ENCODE measurements at regions of chr2 and their contacts with region 1.

Region 1: GRCh38 chr2:160493227-160494028 is at the start of gene RBMS1:
- DNase-seq: peak; percentile 82
- total RNA-seq, gene RBMS1: 75.3 TPM

Region 2: DNA sequence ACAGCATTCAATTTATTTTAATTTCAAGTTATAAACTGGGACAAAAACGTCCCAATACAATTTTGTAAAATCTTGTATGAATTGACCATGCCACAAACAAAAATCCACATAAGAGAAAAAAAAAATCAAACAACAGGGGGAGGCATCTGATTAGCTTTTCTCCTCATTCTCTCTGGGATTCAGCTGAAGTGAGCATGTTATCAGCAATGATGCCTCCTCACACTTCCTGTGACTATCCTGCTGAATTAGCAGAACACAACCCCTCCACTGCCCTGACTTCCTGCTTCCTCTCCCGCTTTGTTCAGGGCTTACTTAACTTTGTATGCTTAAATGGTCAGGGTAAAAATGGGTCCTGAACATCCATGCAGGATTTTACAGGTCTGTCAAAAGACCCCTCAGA is 161.1 kb before region 1 on chr2:
- intact Hi-C with region 1: loop called (anchors 5 kb)
- DNase-seq: no peak

Region 3: GRCh38 chr2:160429248-160430000 is 64.0 kb before region 1 on chr2:
- intact Hi-C with region 1: loop called (anchors 5 kb)
- DNase-seq: no peak

Region 4: DNA sequence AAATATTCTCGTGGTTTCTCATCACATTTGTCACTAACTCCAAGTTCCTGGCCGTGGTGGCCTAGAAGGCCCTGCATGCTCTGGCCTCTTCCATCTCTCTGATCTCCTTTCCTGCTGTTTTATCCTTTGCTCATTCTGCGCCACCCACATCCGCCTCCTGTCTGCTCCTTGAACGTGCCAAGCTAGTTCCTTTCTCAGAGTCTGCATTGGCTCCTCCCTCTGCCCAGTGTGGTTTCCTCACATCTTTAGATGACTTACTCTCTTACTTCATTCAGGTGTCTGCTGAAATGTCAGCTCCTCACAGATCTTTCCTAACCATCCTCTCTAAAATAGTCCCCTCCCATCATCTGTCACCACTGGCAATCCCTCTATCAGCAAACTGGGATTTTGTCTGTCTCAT is 158.8 kb after region 1 on chr2:
- intact Hi-C with region 1: no loop called
- DNase-seq: no peak

Region 5: GRCh38 chr2:160666154-160667060 is 173.0 kb after region 1 on chr2:
- intact Hi-C with region 1: loop called (anchors 5 kb)
- DNase-seq: no peak